GM12878 (cell line): ENCODE measurements at regions of chr2 and their contacts with region 1.

Region 1: GRCh38 chr2:3575534-3576262 is 638 bp downstream of the RPS7 start:
- DNase-seq: no peak
- ATAC-seq: peak; percentile 44
- H3K4me3 ChIP-seq: peak overlapping the region; percentile 92
- H3K27ac ChIP-seq: peak overlapping the region; percentile 75
- H3K4me1 ChIP-seq: peaks cover 8% of the 10 kb centered on the region
- H3K27me3 ChIP-seq: no peaks in the 10 kb centered on the region
- CTCF ChIP-seq: no peak
- EP300 ChIP-seq: no peak
- POLR2A ChIP-seq: peak; percentile 7; the same call in 1 of the 2 replicates
- RAD21 ChIP-seq: no peak

Region 2: GRCh38 chr2:3379647-3380534 is 195.8 kb before region 1 on chr2 and contains the start of gene TRAPPC12:
- CTCF ChIA-PET with region 1: no interaction called
- POLR2A ChIA-PET with region 1: interaction called, 3 read pairs
- RAD21 ChIA-PET with region 1: no interaction called
- SMC1A ChIA-PET with region 1: no interaction called
- in situ Hi-C with region 1: no loop called
- intact Hi-C with region 1: loop called (anchors 5 kb)
- DNase-seq: peak; percentile 69
- ATAC-seq: peak; percentile 87
- H3K4me3 ChIP-seq: peak within 1 kb of the TSS; percentile 77
- H3K27ac ChIP-seq: peak within 1 kb of the TSS; percentile 86
- H3K4me1 ChIP-seq: peaks cover 11% of the 10 kb centered on the region
- H3K27me3 ChIP-seq: no peaks in the 10 kb centered on the region
- CTCF ChIP-seq: peak; percentile 39 to 55 (median 47)
- EP300 ChIP-seq: no peak
- POLR2A ChIP-seq: peak; percentile 99
- RAD21 ChIP-seq: 0 out of 2 replicates have a peak, but pooled peaks have one; percentile 13
- polyA plus RNA-seq, gene TRAPPC12: 8.6 to 22.9 TPM

Region 3: DNA sequence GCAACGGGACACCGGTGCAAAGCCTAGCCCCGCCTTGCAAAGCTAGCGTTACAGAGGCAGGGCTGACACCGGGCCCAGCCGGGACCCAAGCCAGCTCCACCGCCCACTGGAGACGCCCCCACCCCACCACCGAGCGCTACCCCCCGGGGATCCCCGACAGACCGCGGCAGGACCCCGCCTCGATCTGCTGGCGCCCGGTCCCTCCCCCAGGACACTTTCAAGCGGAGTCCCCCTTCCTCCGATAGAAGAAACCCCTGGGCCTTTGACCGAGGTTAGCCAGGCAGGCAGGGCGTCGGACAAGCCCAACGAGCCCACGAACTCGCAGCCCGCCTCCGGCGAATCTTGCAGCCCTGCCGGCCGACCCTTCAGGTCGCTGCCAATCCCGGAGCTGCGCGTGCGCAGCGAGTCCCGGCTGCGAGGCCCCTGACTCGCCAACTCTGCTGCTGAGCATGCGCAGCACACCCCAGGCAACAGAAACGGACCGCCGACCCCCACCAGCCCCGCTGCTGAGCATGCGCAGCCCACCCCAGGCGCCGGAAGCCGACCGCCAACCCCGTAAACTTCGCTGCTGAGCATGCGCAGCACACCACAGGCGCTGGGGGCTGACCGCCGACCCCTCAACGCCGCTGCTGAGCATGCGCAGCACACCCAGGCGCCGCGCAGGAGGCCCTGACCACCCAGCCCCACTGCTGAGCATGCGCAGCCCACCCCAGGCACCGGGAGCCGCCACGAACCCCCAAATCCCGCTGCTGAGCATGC is 57.0 kb before region 1 on chr2:
- CTCF ChIA-PET with region 1: no interaction called
- POLR2A ChIA-PET with region 1: no interaction called
- RAD21 ChIA-PET with region 1: interaction called, 5 read pairs
- SMC1A ChIA-PET with region 1: no interaction called
- in situ Hi-C with region 1: no loop called
- intact Hi-C with region 1: loop called (anchors 5 kb)
- DNase-seq: peak; percentile 94
- ATAC-seq: peak; percentile 89
- H3K4me3 ChIP-seq: peak overlapping the region; percentile 69
- H3K27ac ChIP-seq: peak overlapping the region; percentile 87
- H3K4me1 ChIP-seq: peaks cover 6% of the 10 kb centered on the region
- H3K27me3 ChIP-seq: no peaks in the 10 kb centered on the region
- CTCF ChIP-seq: no peak
- EP300 ChIP-seq: no peak; a peak in 1 of 4 replicates
- POLR2A ChIP-seq: peak; percentile 93
- RAD21 ChIP-seq: no peak

Region 4: GRCh38 chr2:3558205-3559014 is 17.3 kb before region 1 on chr2 and contains the start of gene RNASEH1:
- CTCF ChIA-PET with region 1: interaction called, 4 read pairs
- POLR2A ChIA-PET with region 1: interaction called, 24 read pairs
- RAD21 ChIA-PET with region 1: interaction called, 14 read pairs
- SMC1A ChIA-PET with region 1: interaction called, 35 read pairs
- in situ Hi-C with region 1: no loop called
- intact Hi-C with region 1: loop called (anchors 1 kb)
- DNase-seq: peak; percentile 85
- ATAC-seq: peak; percentile 95
- H3K4me3 ChIP-seq: peak within 1 kb of the TSS; percentile 78
- H3K27ac ChIP-seq: peak within 1 kb of the TSS; percentile 78
- H3K4me1 ChIP-seq: peaks cover 10% of the 10 kb centered on the region
- H3K27me3 ChIP-seq: no peaks in the 10 kb centered on the region
- CTCF ChIP-seq: no peak
- EP300 ChIP-seq: no peak
- POLR2A ChIP-seq: peak; percentile 94
- RAD21 ChIP-seq: no peak
- polyA plus RNA-seq, gene RNASEH1: 24.6 to 25.7 TPM

Region 5: GRCh38 chr2:3563521-3563976 is 12.1 kb before region 1 on chr2:
- CTCF ChIA-PET with region 1: interaction called, 14 read pairs
- POLR2A ChIA-PET with region 1: interaction called, 24 read pairs
- RAD21 ChIA-PET with region 1: interaction called, 14 read pairs
- SMC1A ChIA-PET with region 1: interaction called, 35 read pairs
- in situ Hi-C with region 1: no loop called
- intact Hi-C with region 1: loop called (anchors 1 kb)
- DNase-seq: peak; percentile 62
- ATAC-seq: peak; percentile 76
- H3K4me3 ChIP-seq: peak overlapping the region; percentile 41; the same call in 1 of the 2 replicates
- H3K27ac ChIP-seq: peak overlapping the region; percentile 82
- H3K4me1 ChIP-seq: peaks cover 25% of the 10 kb centered on the region
- H3K27me3 ChIP-seq: no peaks in the 10 kb centered on the region
- CTCF ChIP-seq: no peak
- EP300 ChIP-seq: no peak
- POLR2A ChIP-seq: peak; percentile 18; the same call in 1 of the 2 replicates
- RAD21 ChIP-seq: no peak